ENCODE measurements at regions of chr7 and their contacts with region 1.

Region 1: GRCh38 chr7:140533394-140533872 is 54.1 kb upstream of the MKRN1 start:
- DNase-seq: peak in 1 of 3 donors; percentile 56
- ATAC-seq: peak in 1 of 2 donors; percentile 27
- H3K4me3 ChIP-seq: no peak overlapping the region
- H3K27ac ChIP-seq: no peak overlapping the region
- H3K4me1 ChIP-seq: no peaks in the 10 kb centered on the region
- H3K27me3 ChIP-seq: no peaks in the 10 kb centered on the region

Region 2: GRCh38 chr7:140463111-140463510 is 70.3 kb before region 1 on chr7:
- intact Hi-C with region 1: no loop called
- DNase-seq: no peak
- ATAC-seq: no peak
- H3K4me3 ChIP-seq: no peak overlapping the region
- H3K27ac ChIP-seq: no peak overlapping the region
- H3K4me1 ChIP-seq: no peaks in the 10 kb centered on the region
- H3K27me3 ChIP-seq: no peaks in the 10 kb centered on the region

Region 3: GRCh38 chr7:140581411-140581810 is 48.0 kb after region 1 on chr7:
- intact Hi-C with region 1: loop called in 1 of 4 experiments (anchors 10 kb)
- DNase-seq: no peak
- ATAC-seq: no peak
- H3K4me3 ChIP-seq: no peak overlapping the region
- H3K27ac ChIP-seq: no peak overlapping the region
- H3K4me1 ChIP-seq: no peaks in the 10 kb centered on the region
- H3K27me3 ChIP-seq: no peaks in the 10 kb centered on the region

Measured in right cardiac atrium (tissue), 5 donors.